Activated T-helper 2 cell treated with anti-CD3 and anti-CD28 coated beads, Interferon-gamma antibody, Interleukin-2, Interleukin-4, amounts not matched to agents 10 μg/mL and 5 μg/mL and 100 μg/mL, durations not matched to agents 14 hours and 24 hours and 36 hours (primary cell): ENCODE measurements at regions of chr14 and their contacts with region 1.

Region 1: DNA sequence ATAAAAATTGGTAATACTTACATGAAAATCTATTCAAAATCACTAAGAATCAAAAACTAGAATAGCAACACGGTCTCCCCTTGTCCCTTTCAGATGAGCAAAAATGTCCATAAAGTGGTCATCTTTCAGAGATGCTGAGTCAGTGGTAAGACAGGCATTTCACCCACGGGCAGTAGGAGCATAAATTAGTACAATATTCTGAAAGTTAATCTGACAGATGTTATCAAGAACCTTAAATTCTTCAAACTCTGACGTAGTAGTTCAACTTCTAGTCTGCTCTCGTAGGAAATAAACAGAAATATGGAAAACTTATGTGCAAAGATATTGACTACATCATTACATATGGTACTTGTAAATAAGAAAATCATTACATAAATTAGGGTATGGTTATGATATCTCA is 33.1 kb upstream of the GNPNAT1 start:
- DNase-seq: no peak
- H3K4me3 Mint-ChIP-seq: no peak overlapping the region
- H3K27ac Mint-ChIP-seq: no peak overlapping the region
- H3K4me1 Mint-ChIP-seq: peaks cover 2% of the 10 kb centered on the region
- H3K27me3 Mint-ChIP-seq: peaks cover 16% of the 10 kb centered on the region

Region 2: GRCh38 chr14:52220924-52221811 is 603.3 kb before region 1 on chr14:
- intact Hi-C with region 1: no loop called
- DNase-seq: no peak
- H3K4me3 Mint-ChIP-seq: peak overlapping the region; percentile 69
- H3K27ac Mint-ChIP-seq: peak overlapping the region; percentile 47
- H3K4me1 Mint-ChIP-seq: peaks cover 10% of the 10 kb centered on the region
- H3K27me3 Mint-ChIP-seq: peaks cover 4% of the 10 kb centered on the region

Region 3: GRCh38 chr14:52862632-52863335 is 38.3 kb after region 1 on chr14:
- intact Hi-C with region 1: no loop called
- DNase-seq: no peak
- H3K4me3 Mint-ChIP-seq: no peak overlapping the region
- H3K27ac Mint-ChIP-seq: no peak overlapping the region
- H3K4me1 Mint-ChIP-seq: no peaks in the 10 kb centered on the region
- H3K27me3 Mint-ChIP-seq: no peaks in the 10 kb centered on the region

Region 4: DNA sequence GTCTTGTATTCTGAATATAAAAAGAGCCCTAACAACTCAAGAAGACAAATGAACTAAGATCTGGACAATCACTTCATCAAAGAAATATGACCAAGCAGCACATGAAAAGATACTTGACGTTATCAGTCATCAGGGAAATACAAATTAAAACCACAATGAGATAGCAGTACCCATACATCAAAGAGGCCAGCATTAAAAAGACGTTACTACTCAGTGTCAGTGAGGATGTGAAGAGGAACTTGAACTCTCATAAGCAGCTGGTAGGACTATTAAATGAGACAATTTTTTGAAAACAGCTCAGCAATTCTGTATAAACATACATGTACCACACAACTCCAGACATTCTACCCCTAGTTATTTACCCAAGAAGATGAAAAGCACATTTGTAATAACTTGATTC is 70.5 kb after region 1 on chr14:
- intact Hi-C with region 1: no loop called
- DNase-seq: no peak
- H3K4me3 Mint-ChIP-seq: no peak overlapping the region
- H3K27ac Mint-ChIP-seq: no peak overlapping the region
- H3K4me1 Mint-ChIP-seq: peaks cover 12% of the 10 kb centered on the region
- H3K27me3 Mint-ChIP-seq: peaks cover 3% of the 10 kb centered on the region

Region 5: GRCh38 chr14:52918486-52918885 is 94.0 kb after region 1 on chr14:
- intact Hi-C with region 1: loop called (anchors 5 kb)
- DNase-seq: peak; percentile 19
- H3K4me3 Mint-ChIP-seq: no peak overlapping the region
- H3K27ac Mint-ChIP-seq: peak overlapping the region; percentile 30
- H3K4me1 Mint-ChIP-seq: peaks cover 8% of the 10 kb centered on the region
- H3K27me3 Mint-ChIP-seq: peaks cover 2% of the 10 kb centered on the region

Region 6: DNA sequence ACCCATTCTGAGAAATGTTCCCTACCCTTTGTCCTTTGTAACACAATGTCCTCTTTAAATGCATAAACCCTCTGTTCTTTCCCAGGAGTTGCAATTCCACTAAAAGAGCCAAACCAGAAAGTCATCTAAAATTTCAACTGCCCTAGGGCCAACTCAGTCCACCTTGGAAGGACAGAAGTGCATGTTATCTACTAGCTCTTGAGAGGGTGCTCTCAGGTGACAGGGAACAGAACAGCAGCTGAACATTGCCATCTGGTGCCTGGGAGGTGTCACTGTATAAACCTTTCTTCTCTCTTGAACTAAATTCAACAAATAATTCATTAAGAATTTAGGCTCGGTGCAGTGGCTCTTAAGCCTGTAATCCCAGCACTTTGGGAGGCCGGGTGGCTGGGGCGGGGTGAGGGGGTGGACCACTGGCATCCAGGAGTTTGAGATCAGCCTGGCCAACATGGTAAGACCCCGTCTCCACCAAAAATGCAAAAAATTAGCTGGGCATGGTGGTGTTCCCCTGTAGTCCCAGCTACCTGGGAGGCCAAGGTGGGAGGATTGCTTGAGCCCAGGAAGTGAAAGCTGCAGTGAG is 136.6 kb after region 1 on chr14:
- intact Hi-C with region 1: loop called (anchors 1 kb)
- DNase-seq: no peak
- H3K4me3 Mint-ChIP-seq: no peak overlapping the region
- H3K27ac Mint-ChIP-seq: no peak overlapping the region
- H3K4me1 Mint-ChIP-seq: no peaks in the 10 kb centered on the region
- H3K27me3 Mint-ChIP-seq: peaks cover 2% of the 10 kb centered on the region

Region 7: DNA sequence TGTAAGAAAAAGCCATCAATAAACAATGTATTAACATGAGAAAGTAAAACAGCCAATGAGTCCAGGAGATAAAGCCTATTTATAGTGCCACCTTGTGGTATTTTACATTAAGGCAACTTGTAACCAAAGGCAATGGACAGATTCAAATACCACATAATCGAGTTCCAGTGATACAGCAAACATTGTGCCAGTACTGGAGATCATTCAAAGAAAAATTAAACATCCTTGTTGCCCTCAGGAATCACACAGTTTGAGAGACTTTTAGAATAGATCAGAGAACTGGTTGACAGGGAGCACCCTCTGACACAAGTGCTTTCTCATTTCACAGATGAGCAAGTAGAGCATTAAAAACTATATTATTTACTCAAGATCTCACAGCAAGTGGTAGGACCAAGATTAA is 230.5 kb after region 1 on chr14:
- intact Hi-C with region 1: loop called (anchors 2 kb)
- DNase-seq: no peak
- H3K4me3 Mint-ChIP-seq: no peak overlapping the region
- H3K27ac Mint-ChIP-seq: no peak overlapping the region
- H3K4me1 Mint-ChIP-seq: peaks cover 9% of the 10 kb centered on the region
- H3K27me3 Mint-ChIP-seq: no peaks in the 10 kb centered on the region

Region 8: GRCh38 chr14:53306267-53306721 is 481.8 kb after region 1 on chr14:
- intact Hi-C with region 1: loop called (anchors 2 kb)
- DNase-seq: peak; percentile 11
- H3K4me3 Mint-ChIP-seq: peak overlapping the region; percentile 27
- H3K27ac Mint-ChIP-seq: no peak overlapping the region
- H3K4me1 Mint-ChIP-seq: peaks cover 10% of the 10 kb centered on the region
- H3K27me3 Mint-ChIP-seq: peaks cover 8% of the 10 kb centered on the region

Region 9: GRCh38 chr14:53735916-53736315 is 911.4 kb after region 1 on chr14:
- intact Hi-C with region 1: no loop called
- DNase-seq: no peak
- H3K4me3 Mint-ChIP-seq: no peak overlapping the region
- H3K27ac Mint-ChIP-seq: no peak overlapping the region
- H3K4me1 Mint-ChIP-seq: no peaks in the 10 kb centered on the region
- H3K27me3 Mint-ChIP-seq: no peaks in the 10 kb centered on the region

Region 10: GRCh38 chr14:54175298-54175942 is 1350.9 kb after region 1 on chr14:
- intact Hi-C with region 1: loop called (anchors 10 kb)
- DNase-seq: peak; percentile 22
- H3K4me3 Mint-ChIP-seq: no peak overlapping the region
- H3K27ac Mint-ChIP-seq: no peak overlapping the region
- H3K4me1 Mint-ChIP-seq: peaks cover 4% of the 10 kb centered on the region
- H3K27me3 Mint-ChIP-seq: peaks cover 51% of the 10 kb centered on the region